Common myeloid progenitor, CD34-positive (primary cell): ENCODE measurements at regions of chr5 and their contacts with region 1.

Region 1: DNA sequence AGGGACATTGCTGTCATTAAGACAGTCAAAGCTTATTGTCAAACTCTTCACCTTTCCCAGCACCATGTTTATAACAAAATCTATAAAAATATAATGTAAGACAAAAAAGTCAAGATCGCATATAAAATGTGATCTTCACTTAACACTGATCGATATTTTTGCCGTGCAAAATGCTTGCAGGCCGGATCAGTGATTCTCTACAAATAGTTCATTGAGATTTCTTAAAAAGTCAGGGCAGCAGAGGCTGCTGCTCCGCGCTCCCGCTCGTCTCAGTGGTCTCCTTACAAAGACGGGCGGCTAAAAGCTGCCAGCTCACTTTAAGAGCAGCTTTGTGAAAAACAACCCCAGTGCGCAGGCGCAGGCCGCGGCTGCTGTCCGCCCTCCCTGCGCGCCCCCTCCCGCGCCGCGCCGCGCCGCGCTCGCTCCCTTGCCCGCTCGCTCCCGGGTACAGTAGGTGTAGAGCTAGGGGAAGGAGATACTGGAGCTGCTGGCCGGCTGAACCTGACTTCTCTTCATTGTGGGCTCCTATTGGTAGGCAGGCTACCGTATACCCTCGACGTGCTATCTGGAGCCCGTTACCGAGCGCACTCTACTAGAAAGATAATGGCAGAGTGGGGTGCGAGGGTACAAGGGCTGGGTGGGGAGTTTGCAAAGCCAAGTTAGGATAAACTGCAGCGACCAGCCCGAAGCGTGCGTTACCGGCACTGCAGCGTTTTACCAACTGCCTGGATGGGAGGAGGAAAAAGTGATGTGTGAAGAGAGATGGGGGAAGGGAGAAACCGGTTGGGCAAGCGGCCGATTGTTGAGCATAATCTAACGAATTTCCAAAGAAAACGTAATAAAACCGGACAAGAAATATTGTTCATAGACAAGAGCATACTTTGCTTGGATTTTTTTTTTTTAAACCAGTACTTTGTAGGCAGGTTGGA is at the start of gene ARRDC3:
- DNase-seq: peak; percentile 94 to 97 (median 96)
- H3K4me3 ChIP-seq: peak within 1 kb of the TSS; percentile 32 to 99 (median 88)
- H3K27ac ChIP-seq: peak within 1 kb of the TSS; percentile 96 to 99
- H3K4me1 ChIP-seq: peaks cover 10 to 24% (median 19%) of the 10 kb centered on the region in 4 experiments
- H3K27me3 ChIP-seq: no peaks in the 10 kb centered on the region

Region 2: GRCh38 chr5:90866333-90866732 is 517.0 kb before region 1 on chr5:
- CTCF ChIA-PET with region 1: interaction called, 40 read pairs
- POLR2A ChIA-PET with region 1: interaction called, 3 read pairs
- DNase-seq: peak; percentile 26 to 33 (median 31)
- H3K4me3 ChIP-seq: peak overlapping the region in 3 of 7 experiments; percentile 30 to 60 (median 39)
- H3K27ac ChIP-seq: peak overlapping the region in 1 of 2 experiments; percentile 32
- H3K4me1 ChIP-seq: peaks cover 0 to 14% (median 4%) of the 10 kb centered on the region in 4 experiments
- H3K27me3 ChIP-seq: no peaks in the 10 kb centered on the region

Region 3: GRCh38 chr5:91101600-91102379 is 281.5 kb before region 1 on chr5:
- CTCF ChIA-PET with region 1: interaction called, 44 read pairs
- POLR2A ChIA-PET with region 1: no interaction called
- DNase-seq: peak; percentile 80 to 88 (median 84)
- H3K4me3 ChIP-seq: peak overlapping the region in 2 of 7 experiments; percentile 24 to 61
- H3K27ac ChIP-seq: no peak overlapping the region
- H3K4me1 ChIP-seq: peaks cover 0 to 2% (median 0%) of the 10 kb centered on the region in 4 experiments
- H3K27me3 ChIP-seq: no peaks in the 10 kb centered on the region

Region 4: DNA sequence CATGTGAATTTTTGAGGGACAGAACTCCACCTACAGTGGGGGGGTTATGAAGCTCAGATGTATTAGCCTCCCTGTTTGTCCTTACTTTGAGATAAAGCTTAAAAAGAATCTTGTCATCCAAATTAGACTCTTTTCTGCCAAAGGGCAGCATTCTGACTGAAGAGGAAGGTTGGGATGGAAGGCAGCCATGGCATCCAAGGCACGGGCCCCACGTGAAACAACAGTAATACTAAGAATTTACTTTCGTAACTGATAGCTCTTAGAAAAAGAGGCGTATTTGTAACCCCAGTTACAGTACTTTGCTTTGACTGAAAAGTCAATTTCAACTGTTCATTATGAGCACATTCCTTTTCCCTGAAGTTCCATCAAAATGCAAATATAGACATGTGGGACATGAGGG is 168.7 kb before region 1 on chr5:
- CTCF ChIA-PET with region 1: interaction called, 65 read pairs
- POLR2A ChIA-PET with region 1: interaction called, 4 read pairs
- DNase-seq: no peak
- H3K4me3 ChIP-seq: no peak overlapping the region
- H3K27ac ChIP-seq: no peak overlapping the region
- H3K4me1 ChIP-seq: no peaks in the 10 kb centered on the region
- H3K27me3 ChIP-seq: no peaks in the 10 kb centered on the region

Region 5: DNA sequence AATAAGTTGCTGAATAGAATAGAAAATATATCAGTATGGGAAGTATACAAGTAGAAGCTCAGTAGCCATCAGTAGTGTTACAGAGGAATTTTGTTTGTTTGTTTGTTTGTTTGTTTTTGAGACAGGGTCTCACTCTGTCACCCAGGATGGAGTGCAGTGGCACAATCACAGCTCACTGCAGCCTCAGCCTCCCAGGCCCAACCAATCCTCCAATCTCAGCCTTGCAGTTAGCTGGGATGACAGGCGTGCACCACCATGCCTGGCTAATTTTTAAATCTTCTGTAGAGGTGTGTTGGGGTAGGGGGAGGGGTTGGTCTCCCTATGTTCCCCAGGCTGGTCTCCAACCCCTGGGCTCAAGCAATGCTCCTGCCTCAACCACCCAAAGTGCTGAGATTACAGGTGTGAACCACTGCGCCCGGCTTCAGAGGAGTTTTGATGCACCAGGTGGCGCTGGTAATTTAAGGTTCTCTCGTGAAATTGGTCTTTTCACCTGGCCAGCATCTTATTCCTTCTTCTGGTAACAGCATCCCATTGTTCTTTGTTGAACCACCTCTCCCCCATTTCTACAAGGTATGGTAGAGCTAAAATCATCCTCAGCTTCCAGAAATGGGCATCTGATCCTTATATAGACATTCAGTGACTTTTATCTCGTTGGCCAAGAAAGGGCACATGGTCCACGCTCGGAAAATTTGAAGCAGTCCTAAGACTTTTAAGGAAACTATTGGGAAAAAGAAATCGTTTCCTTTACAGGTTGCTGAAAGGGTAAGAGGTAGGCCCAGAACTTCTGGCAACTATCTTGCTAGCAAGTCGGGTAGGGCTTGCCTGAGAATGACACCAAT is 157.2 kb before region 1 on chr5:
- CTCF ChIA-PET with region 1: interaction called, 65 read pairs
- POLR2A ChIA-PET with region 1: no interaction called
- DNase-seq: peak; percentile 18 to 35 (median 31)
- H3K4me3 ChIP-seq: no peak overlapping the region
- H3K27ac ChIP-seq: no peak overlapping the region
- H3K4me1 ChIP-seq: peaks cover 0 to 2% (median 0%) of the 10 kb centered on the region in 4 experiments
- H3K27me3 ChIP-seq: no peaks in the 10 kb centered on the region

Region 6: GRCh38 chr5:91280362-91281269 is 102.7 kb before region 1 on chr5:
- CTCF ChIA-PET with region 1: interaction called, 13 read pairs
- POLR2A ChIA-PET with region 1: interaction called, 9 read pairs
- DNase-seq: peak; percentile 95 to 98 (median 98)
- H3K4me3 ChIP-seq: peak overlapping the region; percentile 3 to 85 (median 70)
- H3K27ac ChIP-seq: peak overlapping the region; percentile 42 to 80
- H3K4me1 ChIP-seq: peaks cover 0 to 24% (median 23%) of the 10 kb centered on the region in 4 experiments
- H3K27me3 ChIP-seq: peaks cover 0 to 7% (median 0%) of the 10 kb centered on the region in 5 experiments

Region 7: DNA sequence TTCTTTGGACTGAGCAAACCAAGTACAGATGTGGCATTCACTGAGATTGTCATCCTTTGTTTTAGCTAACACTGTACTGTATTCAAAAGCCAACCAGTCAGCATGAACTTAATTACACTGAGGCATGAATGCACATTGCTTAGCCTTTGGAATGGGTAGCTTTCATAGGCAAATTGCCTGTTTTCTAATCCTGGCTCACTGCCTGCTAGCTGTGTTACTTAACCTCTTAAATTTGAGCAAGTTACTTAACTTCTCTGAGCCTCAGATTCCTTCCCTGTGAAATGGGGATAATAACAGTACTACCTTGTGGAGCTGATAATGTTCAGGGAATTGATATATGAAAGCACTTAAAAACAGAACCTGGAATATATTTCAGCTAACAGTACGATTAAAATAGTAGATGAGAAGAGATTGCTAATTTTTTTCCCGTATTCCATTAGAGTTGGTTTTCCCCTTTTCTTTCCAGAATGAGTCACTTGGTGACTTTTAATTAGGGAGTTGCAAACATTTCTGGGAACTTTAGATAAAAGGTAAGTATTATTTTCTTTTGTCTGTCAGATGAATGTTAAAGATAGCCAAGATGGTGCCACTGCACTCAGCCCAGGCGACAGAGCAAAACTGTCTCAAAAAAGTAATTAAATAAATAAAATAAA is 44.1 kb before region 1 on chr5:
- CTCF ChIA-PET with region 1: no interaction called
- POLR2A ChIA-PET with region 1: no interaction called
- DNase-seq: no peak
- H3K4me3 ChIP-seq: no peak overlapping the region
- H3K27ac ChIP-seq: no peak overlapping the region
- H3K4me1 ChIP-seq: no peaks in the 10 kb centered on the region
- H3K27me3 ChIP-seq: no peaks in the 10 kb centered on the region